WTC11 (cell line): ENCODE measurements at regions of chr11 and their contacts with region 1.

Region 1: GRCh38 chr11:76734456-76735420 is 48.4 kb upstream of the TSKU start:
- DNase-seq: no peak
- ATAC-seq: peak; percentile 9
- H3K4me3 Mint-ChIP-seq: no peak overlapping the region
- H3K27ac Mint-ChIP-seq: peak overlapping the region; percentile 67; the same call in 1 of the 2 replicates
- H3K4me1 Mint-ChIP-seq: peaks cover 33% of the 10 kb centered on the region
- H3K27me3 Mint-ChIP-seq: peaks cover 2% of the 10 kb centered on the region; the same call in 1 of the 2 replicates
- CTCF ChIP-seq: no peak

Region 2: GRCh38 chr11:76700177-76701100 is 34.3 kb before region 1 on chr11:
- CTCF ChIA-PET with region 1: interaction called, 11 read pairs
- POLR2A ChIA-PET with region 1: no interaction called
- DNase-seq: no peak
- ATAC-seq: no peak
- H3K4me3 Mint-ChIP-seq: no peak overlapping the region
- H3K27ac Mint-ChIP-seq: no peak overlapping the region
- H3K4me1 Mint-ChIP-seq: peaks cover 47% of the 10 kb centered on the region
- H3K27me3 Mint-ChIP-seq: no peaks in the 10 kb centered on the region
- CTCF ChIP-seq: no peak

Region 3: GRCh38 chr11:76752321-76753185 is 17.8 kb after region 1 on chr11:
- CTCF ChIA-PET with region 1: interaction called, 11 read pairs
- POLR2A ChIA-PET with region 1: no interaction called
- DNase-seq: no peak
- ATAC-seq: peak; percentile 81
- H3K4me3 Mint-ChIP-seq: no peak overlapping the region
- H3K27ac Mint-ChIP-seq: peak overlapping the region; percentile 18; the same call in 1 of the 2 replicates
- H3K4me1 Mint-ChIP-seq: peaks cover 29% of the 10 kb centered on the region
- H3K27me3 Mint-ChIP-seq: peaks cover 4% of the 10 kb centered on the region
- CTCF ChIP-seq: no peak

Region 4: GRCh38 chr11:76788661-76789439 is 54.1 kb after region 1 on chr11:
- CTCF ChIA-PET with region 1: interaction called, 16 read pairs
- POLR2A ChIA-PET with region 1: no interaction called
- DNase-seq: no peak
- ATAC-seq: no peak
- H3K4me3 Mint-ChIP-seq: no peak overlapping the region
- H3K27ac Mint-ChIP-seq: peak overlapping the region; percentile 60; the same call in 1 of the 2 replicates
- H3K4me1 Mint-ChIP-seq: peaks cover 72% of the 10 kb centered on the region
- H3K27me3 Mint-ChIP-seq: no peaks in the 10 kb centered on the region
- CTCF ChIP-seq: no peak

Region 5: DNA sequence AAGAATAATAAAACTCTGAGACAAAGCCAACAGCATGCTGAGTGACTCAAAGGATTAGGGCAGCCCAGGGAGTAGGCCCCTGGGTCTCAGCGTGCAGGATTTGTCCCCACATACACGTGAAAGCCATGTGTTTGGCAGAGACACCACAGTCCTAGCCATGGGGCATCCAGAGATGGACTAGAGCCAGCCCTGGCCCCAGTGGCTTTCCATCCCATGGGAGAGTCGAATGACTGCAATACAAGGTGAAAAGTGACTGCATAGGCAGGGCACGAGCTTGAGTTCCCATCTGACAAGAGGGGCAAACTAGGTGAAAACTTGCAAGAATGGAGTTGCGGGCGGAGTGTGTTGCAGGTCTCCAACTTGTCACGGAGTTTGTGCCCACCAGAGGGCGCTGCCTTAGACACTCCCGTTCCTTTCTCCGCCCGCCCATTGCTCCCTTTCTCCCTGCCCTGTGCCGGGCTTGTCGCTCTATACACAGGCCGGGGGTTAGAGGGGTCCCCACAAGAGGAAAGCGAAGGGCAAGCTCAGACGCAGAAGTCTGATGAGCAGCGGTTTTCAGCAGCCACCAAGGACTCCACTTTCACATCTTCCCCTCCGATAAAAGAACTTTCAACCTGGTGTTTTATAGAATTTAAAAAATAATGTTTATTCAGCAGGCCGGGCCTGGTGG is 72.6 kb after region 1 on chr11:
- CTCF ChIA-PET with region 1: interaction called, 135 read pairs
- POLR2A ChIA-PET with region 1: no interaction called
- DNase-seq: peak; percentile 95
- ATAC-seq: peak; percentile 93
- H3K4me3 Mint-ChIP-seq: no peak overlapping the region
- H3K27ac Mint-ChIP-seq: no peak overlapping the region
- H3K4me1 Mint-ChIP-seq: peaks cover 12% of the 10 kb centered on the region
- H3K27me3 Mint-ChIP-seq: no peaks in the 10 kb centered on the region; the same call in 1 of the 2 replicates
- CTCF ChIP-seq: peak; percentile 76

Region 6: DNA sequence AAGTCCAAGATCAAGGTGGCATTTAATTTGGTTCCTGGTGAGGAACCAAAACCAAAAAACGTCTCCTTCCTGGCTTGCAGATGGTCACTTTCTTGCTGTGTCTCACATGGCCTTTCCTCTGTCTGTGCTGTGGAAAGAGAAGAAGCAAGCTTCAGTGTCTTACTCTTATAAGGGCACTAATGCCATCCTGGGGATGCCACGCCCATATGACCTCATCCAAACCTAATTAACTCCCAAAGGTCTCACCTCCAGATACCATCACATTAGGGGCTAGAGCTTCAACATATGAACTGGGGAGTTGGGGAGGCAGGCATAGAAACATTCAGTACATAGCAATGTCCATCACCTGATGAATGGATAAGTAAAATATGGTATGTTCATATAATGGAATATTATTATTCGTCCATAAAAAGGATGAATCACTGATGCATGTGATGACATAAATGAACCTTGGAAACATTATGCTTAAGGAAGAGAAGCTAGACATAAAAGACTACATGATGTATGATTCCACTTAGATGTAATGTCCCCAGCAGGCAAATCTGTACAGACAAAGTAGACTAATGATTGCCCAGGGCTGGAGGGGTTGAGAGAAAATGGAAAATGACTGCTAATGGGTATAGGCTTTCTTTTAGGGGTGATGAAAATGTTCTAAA is 220.8 kb after region 1 on chr11:
- CTCF ChIA-PET with region 1: no interaction called
- POLR2A ChIA-PET with region 1: no interaction called
- DNase-seq: no peak
- ATAC-seq: no peak
- H3K4me3 Mint-ChIP-seq: no peak overlapping the region
- H3K27ac Mint-ChIP-seq: no peak overlapping the region
- H3K4me1 Mint-ChIP-seq: peaks cover 6% of the 10 kb centered on the region
- H3K27me3 Mint-ChIP-seq: no peaks in the 10 kb centered on the region
- CTCF ChIP-seq: no peak

Region 7: GRCh38 chr11:77039491-77040400 is 305.0 kb after region 1 on chr11:
- CTCF ChIA-PET with region 1: interaction called, 20 read pairs
- POLR2A ChIA-PET with region 1: no interaction called
- DNase-seq: peak; percentile 71
- ATAC-seq: peak; percentile 68
- H3K4me3 Mint-ChIP-seq: peak overlapping the region; percentile 44
- H3K27ac Mint-ChIP-seq: no peak overlapping the region
- H3K4me1 Mint-ChIP-seq: peaks cover 7% of the 10 kb centered on the region
- H3K27me3 Mint-ChIP-seq: peaks cover 52% of the 10 kb centered on the region
- CTCF ChIP-seq: peak; percentile 52; the same call in 1 of the 2 replicates